Activated CD4-positive, alpha-beta T cell treated with anti-CD3 and anti-CD28 coated beads, Interleukin-2, amount 10 ng/mL, durations not matched to agents 24 days and 14 days (primary cell): ENCODE measurements at regions of chr5 and their contacts with region 1.

Region 1: GRCh38 chr5:142821733-142822487 is 51.7 kb downstream of the ARHGAP26 start:
- DNase-seq: no peak
- H3K4me3 Mint-ChIP-seq: peak overlapping the region; percentile 0
- H3K27ac Mint-ChIP-seq: peak overlapping the region; percentile 71
- H3K4me1 Mint-ChIP-seq: peaks cover 55% of the 10 kb centered on the region
- H3K27me3 Mint-ChIP-seq: no peaks in the 10 kb centered on the region

Region 2: DNA sequence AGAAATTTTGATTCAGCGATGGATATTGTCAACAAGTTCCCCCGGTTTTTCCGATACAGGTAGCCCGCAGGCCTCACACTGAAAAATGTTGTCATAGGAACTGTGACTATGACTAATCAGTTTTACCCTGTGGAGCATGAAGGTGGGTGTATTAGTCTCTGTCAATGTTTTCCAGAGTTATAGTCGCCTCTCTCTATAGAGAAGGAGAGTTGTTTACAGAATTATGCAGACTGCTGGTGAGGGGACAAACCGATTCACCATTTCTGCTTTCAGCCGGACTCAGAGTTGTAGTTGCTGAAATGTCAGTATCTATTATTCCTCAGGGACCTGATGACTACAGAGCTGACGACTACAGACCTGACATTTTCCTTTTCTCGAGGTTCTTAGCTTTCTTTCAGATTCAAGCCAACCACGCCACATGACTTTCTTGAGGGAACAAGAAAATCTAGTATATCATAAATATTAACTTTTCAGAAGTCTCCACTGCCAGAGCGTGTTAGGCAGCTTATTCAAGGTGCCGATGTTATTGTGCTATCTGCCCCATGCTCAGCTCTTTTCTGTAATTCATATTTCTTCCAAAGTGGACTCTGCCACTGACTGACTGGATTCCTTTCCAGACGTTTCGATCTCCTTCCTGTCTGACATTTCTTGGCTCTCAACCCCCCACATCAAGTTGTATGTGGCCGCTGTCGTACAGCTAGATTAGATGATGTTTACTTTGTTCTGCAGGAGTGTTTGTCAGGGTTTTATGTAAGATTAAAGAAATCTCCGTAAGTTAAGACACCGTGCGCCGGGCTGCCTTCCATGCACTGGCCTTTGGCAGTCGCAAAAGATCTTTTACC is 314.2 kb before region 1 on chr5:
- intact Hi-C with region 1: loop called (anchors 10 kb)
- DNase-seq: no peak
- H3K4me3 Mint-ChIP-seq: peak overlapping the region; percentile 17
- H3K27ac Mint-ChIP-seq: peak overlapping the region; percentile 75
- H3K4me1 Mint-ChIP-seq: peaks cover 34% of the 10 kb centered on the region
- H3K27me3 Mint-ChIP-seq: no peaks in the 10 kb centered on the region

Region 3: GRCh38 chr5:142783601-142784341 is 38.1 kb before region 1 on chr5:
- intact Hi-C with region 1: loop called (anchors 1 kb)
- DNase-seq: peak; percentile 82
- H3K4me3 Mint-ChIP-seq: peak overlapping the region; percentile 5
- H3K27ac Mint-ChIP-seq: peak overlapping the region; percentile 71
- H3K4me1 Mint-ChIP-seq: peaks cover 40% of the 10 kb centered on the region
- H3K27me3 Mint-ChIP-seq: no peaks in the 10 kb centered on the region

Region 4: DNA sequence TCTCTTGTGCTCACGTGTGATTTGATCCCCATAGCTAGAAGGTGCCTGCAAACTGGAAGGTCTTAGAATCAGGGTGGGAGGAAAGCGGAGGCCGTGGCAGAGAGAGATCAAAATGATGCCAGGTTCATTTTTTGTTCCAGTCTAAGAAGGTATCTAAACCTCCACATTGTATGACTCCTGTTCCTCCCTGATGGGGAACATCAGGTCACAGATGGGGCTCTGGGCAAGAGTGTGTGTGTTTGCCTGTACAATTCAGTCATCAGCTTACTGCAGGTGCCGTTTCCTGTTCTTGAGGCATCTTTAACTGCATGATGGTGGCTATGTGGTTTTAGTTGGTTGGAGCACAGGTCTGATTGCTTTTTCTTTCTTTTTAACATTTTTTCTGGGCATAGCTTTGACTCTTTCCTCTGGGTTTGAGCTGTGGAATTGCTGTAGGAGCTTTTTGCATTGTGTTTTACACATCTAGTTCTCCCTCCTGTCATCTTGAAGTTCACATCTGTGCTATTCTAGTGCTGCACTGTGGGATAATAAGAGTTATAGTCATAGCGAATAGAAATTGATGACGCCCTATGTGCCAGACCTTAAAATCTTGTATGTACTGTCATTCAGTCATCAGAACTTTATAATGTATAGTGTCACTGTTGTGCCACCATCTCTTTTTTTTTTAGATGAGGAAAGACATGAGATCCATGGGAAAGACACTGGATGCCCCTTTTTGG is 21.0 kb before region 1 on chr5:
- intact Hi-C with region 1: loop called (anchors 1 kb)
- DNase-seq: peak; percentile 87
- H3K4me3 Mint-ChIP-seq: peak overlapping the region; percentile 79
- H3K27ac Mint-ChIP-seq: peak overlapping the region; percentile 92
- H3K4me1 Mint-ChIP-seq: peaks cover 54% of the 10 kb centered on the region
- H3K27me3 Mint-ChIP-seq: no peaks in the 10 kb centered on the region

Region 5: DNA sequence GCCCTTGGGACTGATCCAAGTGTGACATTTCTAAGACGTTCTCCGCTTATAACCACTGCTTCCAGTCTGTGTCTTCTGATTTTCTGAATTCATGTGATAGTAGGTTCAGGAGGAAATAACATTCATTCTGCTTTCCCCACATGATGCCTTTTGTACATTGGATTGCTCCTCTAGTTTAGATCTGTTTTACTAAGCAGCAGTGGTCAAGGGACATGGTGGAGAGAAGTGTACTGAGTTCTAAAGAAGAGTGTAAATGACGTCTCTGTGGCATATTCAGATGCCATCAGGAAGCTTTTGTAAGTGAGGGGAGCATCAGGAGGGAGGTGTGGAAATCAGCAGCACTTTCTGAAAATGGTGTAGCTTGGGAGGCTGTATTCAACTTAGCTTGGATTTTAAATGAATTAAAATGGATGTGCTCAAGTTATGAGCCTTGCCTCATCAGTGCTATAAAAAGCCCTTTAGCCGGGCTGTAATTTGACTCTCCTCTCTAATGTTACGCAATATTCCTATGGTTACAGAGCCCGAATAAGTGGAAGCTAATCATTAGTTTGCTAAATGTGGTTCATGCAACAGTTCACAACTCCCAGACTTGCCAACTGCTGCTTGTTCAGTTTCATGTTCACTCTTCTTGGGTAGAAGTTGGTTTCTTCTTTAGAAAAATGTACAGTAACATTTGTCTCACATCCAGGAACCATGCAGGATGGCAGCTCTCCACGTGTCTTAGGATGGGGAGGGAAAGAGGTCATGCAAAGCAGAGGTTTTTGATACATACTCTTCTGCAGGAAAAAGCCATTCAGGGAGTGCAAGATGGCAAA is 229.5 kb after region 1 on chr5:
- intact Hi-C with region 1: loop called (anchors 10 kb)
- DNase-seq: no peak
- H3K4me3 Mint-ChIP-seq: no peak overlapping the region
- H3K27ac Mint-ChIP-seq: peak overlapping the region; percentile 70
- H3K4me1 Mint-ChIP-seq: peaks cover 62% of the 10 kb centered on the region
- H3K27me3 Mint-ChIP-seq: no peaks in the 10 kb centered on the region

Region 6: DNA sequence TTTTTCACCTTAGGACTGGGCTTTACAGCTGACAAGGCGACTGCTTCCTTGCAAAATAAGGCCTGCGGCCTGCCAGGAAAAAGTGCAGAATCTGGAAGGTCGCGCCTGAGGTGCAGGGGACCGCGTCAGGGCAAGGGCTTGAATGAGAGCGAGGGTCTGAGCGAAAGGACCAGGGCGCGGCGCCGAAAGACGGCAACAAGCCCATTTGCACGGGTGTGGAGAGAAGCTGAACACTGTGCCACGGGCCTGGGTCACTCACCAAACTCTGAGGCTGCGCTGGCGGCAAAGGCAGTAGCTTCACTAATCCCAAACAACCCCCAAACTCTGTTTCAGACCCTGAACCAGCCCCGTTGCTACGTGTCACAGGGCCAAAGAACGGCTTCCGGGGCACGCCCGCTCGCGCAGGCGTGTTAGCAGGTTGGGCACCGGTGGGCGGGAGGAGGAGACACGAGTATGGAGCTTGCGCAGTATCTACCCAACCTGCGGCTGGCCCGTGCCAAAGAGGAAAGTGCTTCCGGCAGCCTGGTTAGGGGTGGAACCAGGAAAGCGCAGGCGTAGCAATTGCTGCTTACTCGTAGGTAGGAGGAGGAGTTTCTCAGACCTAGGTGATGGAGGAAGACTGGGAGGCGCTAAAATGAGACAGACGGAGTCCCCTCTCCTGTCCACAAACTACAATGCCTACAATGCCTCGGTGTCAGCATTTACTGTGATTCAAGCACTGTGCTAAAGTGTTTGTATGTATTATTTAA is 1348.5 kb after region 1 on chr5 and contains the starts of genes KCTD16 and YIPF5:
- intact Hi-C with region 1: loop called (anchors 5 kb)
- DNase-seq: peak; percentile 99
- H3K4me3 Mint-ChIP-seq: peak within 1 kb of the TSS; percentile 99
- H3K27ac Mint-ChIP-seq: peak within 1 kb of the TSS; percentile 93
- H3K4me1 Mint-ChIP-seq: peaks cover 37% of the 10 kb centered on the region
- H3K27me3 Mint-ChIP-seq: peaks cover 16% of the 10 kb centered on the region
- total RNA-seq, gene KCTD16: not detected in 2 replicates
- total RNA-seq, gene YIPF5: 32.0 and 34.6 TPM in 2 replicates